ENCODE measurements at regions of chr2 and their contacts with region 1.

Region 1: DNA sequence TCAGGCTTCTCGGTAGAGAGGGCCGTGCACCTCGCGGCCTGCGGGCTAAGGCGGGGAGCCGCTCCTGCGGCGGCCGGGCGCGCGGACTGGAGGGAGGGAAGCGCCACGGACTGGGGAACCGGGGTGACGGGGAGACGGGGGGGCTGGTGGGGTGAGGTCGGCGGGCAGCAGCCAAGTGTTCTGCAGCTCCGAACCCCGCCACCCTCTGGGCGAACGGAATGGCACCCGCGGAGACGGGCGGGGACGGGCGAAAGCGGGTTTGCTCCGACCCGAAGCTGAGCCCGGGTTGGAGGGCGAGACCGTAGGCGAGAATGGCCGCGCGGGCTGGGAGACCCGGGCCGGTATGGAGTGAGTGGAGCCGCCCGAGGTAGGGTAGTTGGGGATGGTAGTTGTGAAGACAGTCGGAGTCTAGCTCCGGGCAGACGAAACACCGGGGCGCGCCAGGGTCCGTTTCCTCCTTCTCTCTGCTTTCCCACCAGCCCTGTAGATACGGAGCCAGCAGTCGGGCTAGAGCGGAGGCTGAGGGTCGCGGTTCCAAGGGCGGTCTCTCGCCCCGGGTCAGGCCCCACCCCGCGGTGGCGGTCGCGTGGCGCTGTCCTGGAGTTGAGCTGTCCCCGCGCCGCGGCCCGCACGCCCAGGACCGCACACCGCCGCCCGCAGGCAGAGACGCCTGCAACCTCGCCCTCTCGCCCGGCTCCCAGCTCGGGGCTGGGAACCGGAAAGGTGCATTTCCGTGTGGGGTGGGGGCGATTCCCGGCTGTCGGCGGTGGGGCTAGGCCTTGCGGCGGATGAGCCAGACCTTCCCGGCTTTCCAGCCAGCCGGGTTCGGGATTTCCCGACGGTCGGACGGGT is 160.3 kb upstream of the SIX2 start:
- DNase-seq: no peak

Region 2: DNA sequence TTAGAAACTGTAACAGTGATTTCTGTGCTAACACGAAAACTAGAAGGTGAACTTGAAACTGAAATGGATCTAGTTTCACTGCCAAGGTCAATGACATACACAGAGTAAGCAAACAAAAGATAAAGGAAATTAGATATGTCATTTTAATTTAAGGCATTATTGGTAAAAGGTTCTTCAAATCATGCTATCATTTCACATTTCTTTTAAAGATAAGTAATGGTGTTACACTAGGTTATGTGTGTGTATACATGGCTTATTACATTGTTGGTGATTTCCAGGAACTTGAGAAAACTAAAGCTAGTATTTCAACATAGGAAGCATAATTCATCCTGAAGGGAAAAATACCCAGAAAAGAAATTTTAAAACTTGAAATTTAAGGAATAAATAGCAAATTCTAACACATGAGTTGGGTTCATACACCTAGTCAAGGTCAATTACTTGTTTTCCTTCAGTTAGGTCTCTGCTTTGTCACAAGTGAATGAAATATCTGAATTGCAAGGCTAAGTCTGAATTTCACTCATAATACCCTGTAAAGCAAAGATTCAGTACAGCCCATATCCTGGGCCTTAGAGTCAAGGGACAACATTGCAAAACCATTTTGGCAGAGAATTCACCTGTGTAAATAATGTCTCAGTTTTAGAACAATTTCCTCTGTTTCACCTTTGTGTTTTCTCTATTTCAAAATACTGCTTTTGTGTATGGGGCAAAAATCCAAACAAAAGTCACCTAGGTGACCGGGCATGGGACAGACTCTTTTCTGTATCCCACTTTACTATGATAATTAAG is 299.9 kb after region 1 on chr2:
- intact Hi-C with region 1: loop called (anchors 10 kb)
- DNase-seq: no peak